Adrenal gland (tissue), 19 donors: ENCODE measurements at regions of chr9 and their contacts with region 1.

Region 1: DNA sequence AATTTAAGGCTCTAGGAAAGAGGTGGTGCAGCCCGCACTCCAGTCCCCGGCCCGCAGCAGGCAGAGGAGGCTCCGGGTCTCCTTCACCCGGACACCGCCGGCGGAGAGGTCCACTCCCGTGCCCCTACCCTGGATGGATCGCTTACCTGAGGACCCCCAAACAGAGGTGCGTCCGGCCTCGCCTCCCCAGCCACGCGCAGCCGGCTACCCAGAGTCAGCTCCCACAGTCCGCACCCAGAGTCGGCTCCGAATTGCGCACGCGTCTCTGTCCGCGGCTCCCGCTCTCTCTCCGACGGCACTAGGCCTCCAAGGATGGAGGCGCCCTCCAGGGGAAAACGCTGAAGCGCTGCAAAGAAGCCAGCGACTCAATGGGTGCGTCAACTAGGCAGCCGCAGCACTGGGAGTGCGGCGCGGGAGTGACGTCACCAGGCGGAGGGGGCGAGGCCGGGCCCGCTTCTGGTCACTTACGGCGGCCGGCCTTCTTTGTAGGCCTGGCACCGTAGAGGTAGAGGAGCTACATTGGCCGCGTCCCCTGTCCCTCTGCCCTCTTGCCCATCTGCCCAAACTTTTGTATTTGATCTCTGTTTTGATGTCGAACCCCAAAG is at the start of gene ELP1:
- DNase-seq: peak; percentile 92 to 97 (median 95)
- H3K4me3 ChIP-seq: peak within 1 kb of the TSS; percentile 52 to 98 (median 92)
- H3K27ac ChIP-seq: peak within 1 kb of the TSS; percentile 49 to 98 (median 91)
- H3K4me1 ChIP-seq: peaks cover 9 to 33% of the 10 kb centered on the region in 2 donors
- H3K27me3 ChIP-seq: no peaks in the 10 kb centered on the region
- CTCF ChIP-seq: peak in 2 of 6 experiments; percentile 22 to 33
- POLR2A ChIP-seq: peak; percentile 72 to 74
- total RNA-seq, gene ELP1: 72.5 to 768 (median 158) TPM

Region 2: GRCh38 chr9:109012876-109013678 is 79.3 kb after region 1 on chr9 and contains the start of gene CTNNAL1:
- intact Hi-C with region 1: no loop called
- DNase-seq: peak; percentile 94 to 98 (median 96)
- H3K4me3 ChIP-seq: peak within 1 kb of the TSS; percentile 57 to 92 (median 70)
- H3K27ac ChIP-seq: peak within 1 kb of the TSS; percentile 90 to 96 (median 92)
- H3K4me1 ChIP-seq: peaks cover 18 to 62% of the 10 kb centered on the region in 2 donors
- H3K27me3 ChIP-seq: no peaks in the 10 kb centered on the region
- CTCF ChIP-seq: no peak
- POLR2A ChIP-seq: peak; percentile 93 to 95
- total RNA-seq, gene CTNNAL1: 182 to 817 (median 463) TPM

Region 3: DNA sequence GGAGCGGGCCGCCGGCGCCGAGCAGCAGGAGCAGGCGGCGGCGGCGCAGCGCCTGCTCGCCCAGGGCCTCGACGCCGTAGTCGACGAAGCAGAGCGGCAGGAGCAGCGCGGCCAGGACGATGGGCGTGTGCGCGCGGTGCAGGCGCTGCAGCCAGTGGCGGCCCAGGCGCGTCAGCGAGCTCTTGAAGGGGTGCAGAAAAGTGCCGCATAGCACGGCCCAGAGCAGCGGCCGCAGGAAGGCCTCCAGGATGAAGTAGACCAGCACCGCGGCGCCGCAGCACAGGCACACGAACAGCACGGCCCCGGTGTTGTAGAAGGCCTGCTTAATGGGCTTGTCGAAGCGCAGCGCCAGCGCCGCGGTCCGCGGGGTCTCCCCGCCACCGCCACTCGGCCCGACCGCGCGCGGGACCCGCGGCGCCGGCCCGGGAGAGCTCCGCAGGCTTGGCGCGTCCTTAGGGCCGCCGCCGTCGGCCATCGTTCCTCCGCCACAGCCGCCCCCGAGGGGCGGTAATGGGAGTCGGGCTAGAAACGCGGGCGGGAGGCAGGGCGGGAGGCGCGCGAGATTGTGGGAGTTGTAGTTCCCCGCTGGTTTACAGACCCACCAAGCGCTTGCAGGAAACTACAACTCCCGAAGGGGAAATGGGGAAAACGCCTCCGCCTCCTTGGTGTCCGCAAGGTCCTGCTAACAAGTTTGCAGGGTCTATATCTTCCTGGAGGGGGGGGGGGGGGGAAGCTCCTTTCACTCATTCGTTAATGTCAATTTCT is 185.8 kb after region 1 on chr9 and contains the start of gene TMEM245:
- intact Hi-C with region 1: loop called in 1 of 2 experiments (anchors 10 kb)
- DNase-seq: peak; percentile 96 to 99 (median 98)
- H3K4me3 ChIP-seq: peak within 1 kb of the TSS; percentile 66 to 79 (median 70)
- H3K27ac ChIP-seq: peak within 1 kb of the TSS; percentile 78 to 96 (median 90)
- H3K4me1 ChIP-seq: peaks cover 27 to 39% of the 10 kb centered on the region in 2 donors
- H3K27me3 ChIP-seq: no peaks in the 10 kb centered on the region
- CTCF ChIP-seq: no peak
- POLR2A ChIP-seq: peak; percentile 75 to 91
- total RNA-seq, gene TMEM245: 97.5 to 363 (median 195) TPM